MCF 10A (cell line): ENCODE measurements at regions of chr9 and their contacts with region 1.

Region 1: GRCh38 chr9:36407122-36407723 is 7.2 kb upstream of the RNF38 start:
- DNase-seq: peak; percentile 61
- H3K4me3 Mint-ChIP-seq: no peak overlapping the region
- H3K27ac Mint-ChIP-seq: no peak overlapping the region
- H3K4me1 Mint-ChIP-seq: peaks cover 8% of the 10 kb centered on the region
- H3K27me3 Mint-ChIP-seq: no peaks in the 10 kb centered on the region
- CTCF ChIP-seq: peak; percentile 82

Region 2: GRCh38 chr9:36250079-36250478 is 157.1 kb before region 1 on chr9:
- CTCF ChIA-PET with region 1: interaction called, 12 read pairs
- POLR2A ChIA-PET with region 1: no interaction called
- intact Hi-C with region 1: no loop called
- DNase-seq: no peak
- H3K4me3 Mint-ChIP-seq: no peak overlapping the region
- H3K27ac Mint-ChIP-seq: peak overlapping the region; percentile 23
- H3K4me1 Mint-ChIP-seq: peaks cover 5% of the 10 kb centered on the region
- H3K27me3 Mint-ChIP-seq: no peaks in the 10 kb centered on the region
- CTCF ChIP-seq: no peak

Region 3: DNA sequence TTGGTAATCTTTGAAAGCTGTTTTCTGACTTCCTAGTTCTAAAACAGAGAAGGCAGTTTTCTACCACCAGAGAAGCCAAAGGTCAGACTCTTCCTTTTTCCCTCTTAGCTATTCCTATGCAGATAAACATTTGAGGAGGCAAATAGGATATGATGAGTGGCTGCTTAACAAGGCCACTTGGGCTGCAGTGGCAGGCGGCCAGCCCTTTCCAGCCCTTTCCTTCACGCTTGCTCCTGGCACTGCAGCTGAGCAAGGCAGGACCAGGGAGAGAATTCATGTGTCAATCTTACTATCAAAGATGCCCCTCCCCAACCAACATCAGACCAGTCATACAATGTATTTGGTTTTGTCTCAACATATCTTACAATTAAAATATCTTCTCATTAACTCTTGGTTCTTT is 29.7 kb after region 1 on chr9:
- CTCF ChIA-PET with region 1: interaction called, 73 read pairs
- POLR2A ChIA-PET with region 1: no interaction called
- intact Hi-C with region 1: no loop called
- DNase-seq: no peak
- H3K4me3 Mint-ChIP-seq: no peak overlapping the region
- H3K27ac Mint-ChIP-seq: no peak overlapping the region
- H3K4me1 Mint-ChIP-seq: peaks cover 4% of the 10 kb centered on the region
- H3K27me3 Mint-ChIP-seq: no peaks in the 10 kb centered on the region
- CTCF ChIP-seq: no peak

Region 4: DNA sequence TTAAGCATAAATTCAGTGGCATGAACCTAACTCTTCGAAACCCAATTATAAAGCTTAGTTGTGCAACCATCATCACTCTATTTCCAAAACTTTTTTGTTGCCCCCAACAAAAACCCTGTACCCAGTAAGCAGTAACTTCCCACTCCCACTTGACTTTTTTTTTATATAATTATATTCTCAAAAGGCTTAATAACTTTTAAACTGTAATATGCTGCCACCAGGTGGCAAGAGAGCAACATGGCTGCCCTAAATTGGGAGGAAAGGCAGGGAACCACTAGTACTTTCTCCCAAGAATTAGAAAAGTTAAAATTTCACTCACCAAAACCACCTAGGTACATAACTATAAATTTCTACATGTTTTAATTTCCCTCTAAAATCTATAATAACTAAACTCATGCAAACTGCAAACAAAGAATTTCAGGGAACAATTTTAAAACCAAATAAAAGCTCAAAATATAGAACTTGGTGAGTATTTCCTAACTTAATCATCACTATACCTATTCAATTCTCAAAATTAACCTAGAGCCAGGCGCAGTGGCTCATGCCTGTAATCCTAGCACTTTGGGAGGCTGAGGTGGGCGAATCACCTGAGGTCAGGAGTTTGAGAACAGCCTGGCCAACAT is 43.0 kb after region 1 on chr9:
- CTCF ChIA-PET with region 1: interaction called, 253 read pairs
- POLR2A ChIA-PET with region 1: interaction called, 15 read pairs
- intact Hi-C with region 1: loop called (anchors 1 kb)
- DNase-seq: peak; percentile 74
- H3K4me3 Mint-ChIP-seq: no peak overlapping the region
- H3K27ac Mint-ChIP-seq: no peak overlapping the region
- H3K4me1 Mint-ChIP-seq: no peaks in the 10 kb centered on the region
- H3K27me3 Mint-ChIP-seq: no peaks in the 10 kb centered on the region
- CTCF ChIP-seq: peak; percentile 64

Region 5: GRCh38 chr9:36487482-36488388 is 80.5 kb after region 1 on chr9:
- CTCF ChIA-PET with region 1: interaction called, 10 read pairs
- POLR2A ChIA-PET with region 1: interaction called, 4 read pairs
- intact Hi-C with region 1: no loop called
- DNase-seq: peak; percentile 88
- H3K4me3 Mint-ChIP-seq: peak overlapping the region; percentile 77
- H3K27ac Mint-ChIP-seq: peak overlapping the region; percentile 80
- H3K4me1 Mint-ChIP-seq: peaks cover 7% of the 10 kb centered on the region
- H3K27me3 Mint-ChIP-seq: no peaks in the 10 kb centered on the region
- CTCF ChIP-seq: no peak

Region 6: GRCh38 chr9:36560857-36561221 is 153.6 kb after region 1 on chr9:
- CTCF ChIA-PET with region 1: interaction called, 151 read pairs
- POLR2A ChIA-PET with region 1: interaction called, 7 read pairs
- intact Hi-C with region 1: no loop called
- DNase-seq: peak; percentile 37
- H3K4me3 Mint-ChIP-seq: no peak overlapping the region
- H3K27ac Mint-ChIP-seq: no peak overlapping the region
- H3K4me1 Mint-ChIP-seq: peaks cover 10% of the 10 kb centered on the region
- H3K27me3 Mint-ChIP-seq: no peaks in the 10 kb centered on the region
- CTCF ChIP-seq: no peak